ENCODE measurements at regions of chr19 and their contacts with region 1.

Region 1: DNA sequence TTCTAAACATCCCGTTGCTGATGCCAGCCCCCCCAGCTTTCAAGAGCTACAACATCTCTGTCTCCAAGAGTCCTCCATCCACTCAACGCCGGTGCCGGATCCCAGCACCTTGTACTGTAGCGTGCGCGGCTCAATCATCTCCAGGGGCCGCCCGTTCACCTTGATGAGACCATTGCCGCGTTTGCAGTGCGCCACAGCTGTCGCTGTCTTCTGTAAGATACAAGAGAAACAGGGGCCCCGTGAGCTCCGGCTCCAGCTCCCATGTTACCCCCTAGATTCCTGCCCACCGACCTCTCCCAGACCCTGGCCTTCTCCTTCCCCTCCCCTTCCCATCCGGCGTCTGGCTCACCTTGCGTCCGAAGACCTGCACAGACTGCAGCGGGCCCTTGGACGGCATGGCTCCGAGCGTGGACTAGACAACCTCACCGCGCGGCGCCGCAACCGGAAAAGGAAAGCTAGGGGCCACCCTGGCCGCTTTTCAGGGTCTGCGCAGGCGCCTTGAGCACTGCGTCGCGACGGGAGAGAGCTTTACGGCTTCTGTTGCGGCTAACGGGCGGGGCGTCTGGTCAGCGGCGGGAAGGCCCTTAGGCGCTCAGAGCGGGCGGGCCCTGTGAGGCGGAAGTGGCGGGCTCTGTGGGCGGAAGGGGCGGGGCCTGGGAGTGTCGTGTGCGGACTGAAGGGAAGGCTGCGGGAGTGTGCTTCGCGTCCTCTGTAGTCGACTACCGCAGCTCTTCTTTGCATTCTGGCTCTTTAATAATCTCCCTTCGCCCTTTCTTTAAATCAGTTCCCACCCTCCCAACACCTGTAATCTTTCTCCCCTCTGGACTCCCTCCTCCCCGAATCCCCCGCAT is at the start of gene RPS16:
- DNase-seq: peak; percentile 95
- H3K4me3 ChIP-seq: peak within 1 kb of the TSS; percentile 94 to 98 (median 95)
- H3K27ac ChIP-seq: peak within 1 kb of the TSS; percentile 78
- H3K4me1 ChIP-seq: peaks cover 11% of the 10 kb centered on the region
- H3K27me3 ChIP-seq: no peaks in the 10 kb centered on the region
- CTCF ChIP-seq: no peak
- total RNA-seq, gene RPS16: 361 to 1,710 TPM

Region 2: GRCh38 chr19:39397360-39398296 is 38.1 kb before region 1 on chr19:
- CTCF ChIA-PET with region 1: interaction called, 8 read pairs
- dilution Hi-C with region 1: no loop called
- in situ Hi-C with region 1: no loop called
- intact Hi-C with region 1: loop called (anchors 1 kb)
- DNase-seq: peak; percentile 75
- H3K4me3 ChIP-seq: no peak overlapping the region
- H3K27ac ChIP-seq: peak overlapping the region; percentile 97
- H3K4me1 ChIP-seq: peaks cover 32% of the 10 kb centered on the region
- H3K27me3 ChIP-seq: no peaks in the 10 kb centered on the region
- CTCF ChIP-seq: peak; percentile 97 to 99